ENCODE measurements at regions of chr14 and their contacts with region 1.

Region 1: GRCh38 chr14:77040059-77040740 is 11.7 kb upstream of the IRF2BPL start:
- DNase-seq: peak; percentile 99
- ATAC-seq: peak; percentile 85
- H3K4me3 ChIP-seq: peak overlapping the region; percentile 40 to 67 (median 58)
- H3K27ac ChIP-seq: peak overlapping the region; percentile 84
- H3K4me1 ChIP-seq: peaks cover 89% of the 10 kb centered on the region
- H3K27me3 ChIP-seq: no peaks in the 10 kb centered on the region
- CTCF ChIP-seq: no peak; the same call in 1 of the 2 replicates
- EP300 ChIP-seq: peak; percentile 47 to 68; a peak in 3 of 4 replicates
- POLR2A ChIP-seq: peak; percentile 33 to 45; a peak in 2 of 4 replicates
- RAD21 ChIP-seq: no peak; the same call in 1 of the 2 replicates

Region 2: GRCh38 chr14:76956316-76957090 is 83.7 kb before region 1 on chr14:
- CTCF ChIA-PET with region 1: no interaction called
- POLR2A ChIA-PET with region 1: interaction called, 15 read pairs
- in situ Hi-C with region 1: no loop called
- intact Hi-C with region 1: loop called (anchors 1 kb)
- DNase-seq: peak; percentile 89
- ATAC-seq: peak; percentile 74
- H3K4me3 ChIP-seq: peak overlapping the region; percentile 53 to 77 (median 56)
- H3K27ac ChIP-seq: peak overlapping the region; percentile 78
- H3K4me1 ChIP-seq: peaks cover 89% of the 10 kb centered on the region
- H3K27me3 ChIP-seq: no peaks in the 10 kb centered on the region
- CTCF ChIP-seq: peak; percentile 37
- EP300 ChIP-seq: peak in 1 of 2 experiments; percentile 47; a peak in 1 of 4 replicates
- POLR2A ChIP-seq: peak; percentile 40 to 51; a peak in 3 of 4 replicates
- RAD21 ChIP-seq: 0 out of 2 replicates have a peak, but pooled peaks have one; percentile 44

Region 3: DNA sequence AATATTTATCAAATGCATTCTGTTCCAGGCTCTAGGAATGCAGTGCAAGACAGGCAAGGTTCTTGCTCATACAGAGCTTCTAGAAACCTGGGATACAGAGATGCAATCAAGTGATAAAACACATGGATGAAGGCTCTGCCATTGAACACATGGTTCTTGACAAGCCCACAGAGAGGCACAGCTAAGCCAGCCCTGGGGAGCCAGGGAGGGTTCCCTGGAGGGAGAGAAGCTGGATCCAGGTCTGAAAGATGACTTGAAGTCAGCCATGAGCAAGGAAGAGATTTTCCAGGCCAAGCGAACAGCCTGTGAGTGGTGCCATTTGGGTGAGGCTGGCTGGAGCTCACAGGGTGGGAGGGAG is 77.9 kb before region 1 on chr14:
- CTCF ChIA-PET with region 1: no interaction called
- POLR2A ChIA-PET with region 1: interaction called, 15 read pairs
- in situ Hi-C with region 1: loop called (anchors 5 kb)
- intact Hi-C with region 1: no loop called
- DNase-seq: no peak
- ATAC-seq: peak; percentile 7; the same call in 2 of the 3 replicates
- H3K4me3 ChIP-seq: peak overlapping the region; percentile 53 to 60 (median 57)
- H3K27ac ChIP-seq: peak overlapping the region; percentile 88
- H3K4me1 ChIP-seq: peaks cover 87% of the 10 kb centered on the region
- H3K27me3 ChIP-seq: no peaks in the 10 kb centered on the region
- CTCF ChIP-seq: no peak
- EP300 ChIP-seq: no peak
- POLR2A ChIP-seq: no peak
- RAD21 ChIP-seq: no peak

Region 4: GRCh38 chr14:76968621-76969063 is 71.6 kb before region 1 on chr14:
- CTCF ChIA-PET with region 1: no interaction called
- POLR2A ChIA-PET with region 1: no interaction called
- in situ Hi-C with region 1: loop called (anchors 5 kb)
- intact Hi-C with region 1: no loop called
- DNase-seq: peak; percentile 92
- ATAC-seq: peak; percentile 94
- H3K4me3 ChIP-seq: peak overlapping the region in 1 of 3 experiments; percentile 50; a peak in 4 of 6 replicates
- H3K27ac ChIP-seq: peak overlapping the region; percentile 61
- H3K4me1 ChIP-seq: peaks cover 76% of the 10 kb centered on the region
- H3K27me3 ChIP-seq: no peaks in the 10 kb centered on the region
- CTCF ChIP-seq: peak; percentile 85
- EP300 ChIP-seq: peak in 1 of 2 experiments; percentile 68; a peak in 1 of 4 replicates
- POLR2A ChIP-seq: no peak
- RAD21 ChIP-seq: peak; percentile 86

Region 5: GRCh38 chr14:77028384-77029231 is 11.6 kb before region 1 on chr14 and contains the start of gene IRF2BPL:
- CTCF ChIA-PET with region 1: no interaction called
- POLR2A ChIA-PET with region 1: interaction called, 85 read pairs
- in situ Hi-C with region 1: no loop called
- intact Hi-C with region 1: loop called (anchors 2 kb)
- DNase-seq: peak; percentile 94
- ATAC-seq: peak; percentile 53
- H3K4me3 ChIP-seq: peak within 1 kb of the TSS; percentile 82 to 85 (median 85)
- H3K27ac ChIP-seq: peak within 1 kb of the TSS; percentile 94
- H3K4me1 ChIP-seq: peaks cover 79% of the 10 kb centered on the region
- H3K27me3 ChIP-seq: no peaks in the 10 kb centered on the region
- CTCF ChIP-seq: no peak; the same call in 1 of the 2 replicates
- EP300 ChIP-seq: peak in 1 of 2 experiments; percentile 79; a peak in 3 of 4 replicates
- POLR2A ChIP-seq: peak; percentile 87 to 90
- RAD21 ChIP-seq: peak; percentile 47
- total RNA-seq, gene IRF2BPL: 6.2 and 8.4 TPM in 2 replicates

Region 6: DNA sequence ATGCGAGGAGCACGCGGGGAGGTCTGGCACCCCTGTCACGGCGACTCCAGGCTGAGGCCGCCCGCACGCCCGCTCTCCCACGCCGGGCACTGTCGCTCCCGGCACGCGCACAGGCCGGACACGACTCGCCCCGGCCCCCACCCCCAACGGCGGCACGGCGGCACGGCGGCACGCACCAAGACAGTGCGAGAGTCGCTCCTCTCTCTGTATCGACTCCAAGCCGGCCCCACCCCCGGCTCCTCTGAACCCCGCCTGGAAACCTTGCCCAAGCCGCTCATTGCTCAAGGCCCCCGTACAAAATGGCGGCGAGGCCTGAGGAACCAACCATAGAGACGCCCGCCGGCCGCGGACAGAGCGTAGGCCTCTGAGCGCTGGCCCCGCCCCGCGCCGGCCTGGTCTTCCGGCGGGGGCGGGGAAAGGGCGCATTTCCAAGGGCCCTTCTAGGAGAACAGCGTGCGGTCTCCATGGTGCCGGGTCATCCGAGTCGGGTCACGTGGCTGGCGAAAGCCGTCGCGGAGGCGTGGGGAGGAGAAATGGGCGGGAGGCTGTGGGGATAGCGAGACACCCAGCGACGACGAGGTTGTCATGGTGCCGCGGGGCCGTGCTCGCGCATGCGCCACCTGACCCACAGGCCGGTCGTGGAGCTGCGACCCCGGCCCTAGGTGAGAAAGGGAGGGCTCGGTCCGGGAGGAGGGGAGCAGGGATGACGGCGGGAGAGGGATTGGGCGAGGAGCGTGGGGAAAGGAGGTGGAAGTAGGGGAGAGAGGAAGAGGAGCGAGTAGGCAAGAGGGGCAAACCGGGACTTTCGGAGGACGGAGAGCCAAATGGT is 57.7 kb after region 1 on chr14 and contains the start of gene CIPC:
- CTCF ChIA-PET with region 1: no interaction called
- POLR2A ChIA-PET with region 1: interaction called, 5 read pairs
- in situ Hi-C with region 1: no loop called
- intact Hi-C with region 1: loop called (anchors 5 kb)
- DNase-seq: peak; percentile 96
- ATAC-seq: peak; percentile 93
- H3K4me3 ChIP-seq: peak within 1 kb of the TSS; percentile 75 to 97 (median 92)
- H3K27ac ChIP-seq: peak within 1 kb of the TSS; percentile 88
- H3K4me1 ChIP-seq: peaks cover 27% of the 10 kb centered on the region
- H3K27me3 ChIP-seq: no peaks in the 10 kb centered on the region; a peak in 1 of 5 replicates
- CTCF ChIP-seq: peak; percentile 25; the same call in 1 of the 2 replicates
- EP300 ChIP-seq: peak; percentile 25 to 43; a peak in 1 of 4 replicates
- POLR2A ChIP-seq: peak in 1 of 2 experiments; percentile 72; a peak in 3 of 4 replicates
- RAD21 ChIP-seq: peak; percentile 18; the same call in 1 of the 2 replicates
- total RNA-seq, gene CIPC: 13.9 and 18.4 TPM in 2 replicates